H1 (cell line): ENCODE measurements at regions of chr11 and their contacts with region 1.

Region 1: GRCh38 chr11:62974848-62975522 is 9.8 kb downstream of the SLC22A6 start:
- DNase-seq: peak; percentile 25 to 67
- H3K4me3 ChIP-seq: no peak overlapping the region
- H3K27ac ChIP-seq: no peak overlapping the region
- H3K4me1 ChIP-seq: peaks cover 0 to 4% (median 0%) of the 10 kb centered on the region in 4 experiments; a peak in 2 of 7 replicates
- H3K27me3 ChIP-seq: peaks cover 0 to 4% (median 1%) of the 10 kb centered on the region in 4 experiments; a peak in 3 of 7 replicates
- CTCF ChIP-seq: peak; percentile 71 to 90 (median 87)
- EP300 ChIP-seq: no peak
- POLR2A ChIP-seq: no peak
- RAD21 ChIP-seq: peak; percentile 57 to 67

Region 2: DNA sequence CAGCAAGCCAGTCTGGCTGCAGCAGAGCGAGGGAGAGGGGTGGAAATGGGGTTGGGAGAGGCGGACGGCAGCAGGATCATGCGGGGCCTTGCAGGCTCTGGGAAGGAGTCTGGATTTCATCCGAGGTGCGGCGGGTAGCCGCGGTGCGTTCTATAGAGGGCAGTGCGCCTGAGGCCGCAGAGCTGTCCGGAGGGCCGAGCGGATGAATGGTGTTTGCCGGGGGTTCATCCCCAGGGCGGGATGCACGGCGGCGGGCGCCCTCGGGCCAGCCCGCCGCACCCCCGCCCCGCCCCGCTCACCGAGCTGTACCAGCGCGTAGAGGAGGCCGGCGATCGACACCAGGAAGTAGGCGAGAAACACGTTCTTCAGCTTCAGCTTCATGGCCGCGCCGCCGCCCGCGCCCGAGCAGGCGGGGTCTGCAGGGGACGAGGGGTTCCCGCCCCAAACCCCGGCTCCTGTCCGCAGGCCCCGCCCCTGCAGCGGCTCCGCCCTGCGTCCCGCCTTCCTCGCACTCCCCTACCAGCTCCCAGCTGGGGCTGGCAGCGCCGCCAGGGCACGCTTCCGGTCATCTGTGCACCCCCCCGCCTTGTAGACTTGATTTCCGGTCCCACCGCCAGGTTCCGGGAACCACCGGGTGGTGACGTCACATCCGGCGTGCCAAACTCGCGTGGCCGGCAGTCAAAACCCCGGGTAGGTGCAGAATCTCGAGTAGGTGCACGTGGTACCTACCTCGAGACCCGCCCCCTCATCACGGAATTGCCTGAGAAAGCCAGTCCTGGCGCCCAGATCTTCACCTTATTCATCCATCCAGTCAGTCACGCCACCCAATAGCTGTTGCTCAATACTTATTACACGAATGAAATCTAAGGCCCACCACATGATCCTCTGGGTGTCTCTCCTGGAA is 353.2 kb before region 1 on chr11 and contains the start of gene B3GAT3:
- CTCF ChIA-PET with region 1: no interaction called
- POLR2A ChIA-PET with region 1: no interaction called
- DNase-seq: peak; percentile 97 to 98
- H3K4me3 ChIP-seq: peak within 1 kb of the TSS; percentile 59 to 87 (median 83)
- H3K27ac ChIP-seq: peak within 1 kb of the TSS; percentile 46
- H3K4me1 ChIP-seq: peaks cover 0 to 5% (median 0%) of the 10 kb centered on the region in 4 experiments; a peak in 1 of 7 replicates
- H3K27me3 ChIP-seq: no peaks in the 10 kb centered on the region
- CTCF ChIP-seq: peak in 1 of 3 experiments; percentile 7; a peak in 1 of 4 replicates
- EP300 ChIP-seq: no peak
- POLR2A ChIP-seq: peak in 1 of 2 experiments; percentile 96; a peak in 2 of 3 replicates
- RAD21 ChIP-seq: peak; percentile 0; a peak in 2 of 4 replicates
- total RNA-seq, gene B3GAT3: 28.0 and 34.5 TPM in 2 replicates

Region 3: GRCh38 chr11:62914416-62914815 is 60.6 kb before region 1 on chr11:
- CTCF ChIA-PET with region 1: interaction called, 163 read pairs
- POLR2A ChIA-PET with region 1: no interaction called
- DNase-seq: no peak
- H3K4me3 ChIP-seq: no peak overlapping the region
- H3K27ac ChIP-seq: no peak overlapping the region
- H3K4me1 ChIP-seq: peaks cover 0 to 12% (median 9%) of the 10 kb centered on the region in 4 experiments; a peak in 6 of 7 replicates
- H3K27me3 ChIP-seq: no peaks in the 10 kb centered on the region
- CTCF ChIP-seq: no peak
- EP300 ChIP-seq: no peak
- POLR2A ChIP-seq: no peak
- RAD21 ChIP-seq: no peak

Region 4: GRCh38 chr11:62931499-62932278 is 43.3 kb before region 1 on chr11:
- CTCF ChIA-PET with region 1: interaction called, 18 read pairs
- POLR2A ChIA-PET with region 1: no interaction called
- DNase-seq: no peak
- H3K4me3 ChIP-seq: no peak overlapping the region
- H3K27ac ChIP-seq: no peak overlapping the region
- H3K4me1 ChIP-seq: peaks cover 6 to 14% (median 9%) of the 10 kb centered on the region in 4 experiments; a peak in 5 of 7 replicates
- H3K27me3 ChIP-seq: peaks cover 10 to 26% (median 21%) of the 10 kb centered on the region in 4 experiments
- CTCF ChIP-seq: no peak
- EP300 ChIP-seq: no peak
- POLR2A ChIP-seq: no peak
- RAD21 ChIP-seq: no peak

Region 5: GRCh38 chr11:62958547-62959421 is 16.2 kb before region 1 on chr11:
- CTCF ChIA-PET with region 1: interaction called, 18 read pairs
- POLR2A ChIA-PET with region 1: no interaction called
- DNase-seq: no peak
- H3K4me3 ChIP-seq: no peak overlapping the region
- H3K27ac ChIP-seq: no peak overlapping the region
- H3K4me1 ChIP-seq: 0 out of 7 replicates have a peak, but pooled peaks cover 0 to 3% (median 0%) of the 10 kb centered on the region in 4 experiments
- H3K27me3 ChIP-seq: no peaks in the 10 kb centered on the region
- CTCF ChIP-seq: no peak
- EP300 ChIP-seq: no peak
- POLR2A ChIP-seq: no peak
- RAD21 ChIP-seq: no peak

Region 6: DNA sequence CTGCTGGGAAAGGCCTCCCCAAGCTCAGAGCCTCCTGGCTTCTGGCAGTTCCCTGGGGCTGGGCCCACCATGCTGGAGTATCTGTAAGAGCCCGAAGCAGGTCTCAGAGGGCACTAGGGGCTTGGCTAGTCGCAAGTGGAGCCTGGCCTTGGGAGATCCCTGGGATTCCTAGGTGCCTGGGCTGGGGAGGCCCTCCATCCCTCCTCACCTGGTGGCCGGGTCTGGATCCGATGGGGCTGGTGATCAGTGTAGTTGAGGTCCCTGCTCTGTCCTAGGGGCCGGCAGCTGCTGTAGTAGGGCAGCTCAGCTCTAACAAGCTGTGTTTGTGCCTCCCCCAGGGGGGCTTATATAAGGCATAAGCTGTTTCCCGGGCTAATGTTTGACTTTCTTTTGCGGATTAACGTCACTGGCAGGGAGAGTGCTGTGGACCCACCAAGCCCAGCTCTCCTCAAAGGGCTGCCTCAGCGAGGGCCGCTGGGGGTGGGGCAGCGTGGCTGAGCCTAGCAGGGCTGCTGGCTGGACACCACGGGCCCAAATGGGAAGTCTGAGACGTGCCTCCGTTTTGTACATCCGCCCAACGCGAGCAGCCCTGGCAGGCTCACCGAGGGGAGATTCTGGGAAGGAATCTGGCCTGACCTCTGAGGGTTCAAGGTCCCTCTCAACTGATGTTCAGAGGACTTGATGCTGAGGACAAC is 40.7 kb after region 1 on chr11 and contains the start of gene SLC22A8:
- CTCF ChIA-PET with region 1: interaction called, 201 read pairs
- POLR2A ChIA-PET with region 1: interaction called, 4 read pairs
- DNase-seq: no peak
- H3K4me3 ChIP-seq: no peak within 1 kb of the TSS
- H3K27ac ChIP-seq: no peak within 1 kb of the TSS
- H3K4me1 ChIP-seq: peaks cover 0 to 12% (median 8%) of the 10 kb centered on the region in 4 experiments; a peak in 5 of 7 replicates
- H3K27me3 ChIP-seq: no peaks in the 10 kb centered on the region
- CTCF ChIP-seq: no peak
- EP300 ChIP-seq: no peak
- POLR2A ChIP-seq: no peak
- RAD21 ChIP-seq: no peak
- total RNA-seq, gene SLC22A8: not detected in 2 replicates